Mammary epithelial cell (primary cell): ENCODE measurements at regions of chr7 and their contacts with region 1.

Region 1: GRCh38 chr7:65307651-65308299 is 65.9 kb upstream of the ZNF92 start:
- DNase-seq: peak; percentile 23
- H3K4me3 ChIP-seq: no peak overlapping the region
- H3K27ac ChIP-seq: no peak overlapping the region
- H3K4me1 ChIP-seq: no peaks in the 10 kb centered on the region
- H3K27me3 ChIP-seq: no peaks in the 10 kb centered on the region
- CTCF ChIP-seq: peak; percentile 66 to 83

Region 2: DNA sequence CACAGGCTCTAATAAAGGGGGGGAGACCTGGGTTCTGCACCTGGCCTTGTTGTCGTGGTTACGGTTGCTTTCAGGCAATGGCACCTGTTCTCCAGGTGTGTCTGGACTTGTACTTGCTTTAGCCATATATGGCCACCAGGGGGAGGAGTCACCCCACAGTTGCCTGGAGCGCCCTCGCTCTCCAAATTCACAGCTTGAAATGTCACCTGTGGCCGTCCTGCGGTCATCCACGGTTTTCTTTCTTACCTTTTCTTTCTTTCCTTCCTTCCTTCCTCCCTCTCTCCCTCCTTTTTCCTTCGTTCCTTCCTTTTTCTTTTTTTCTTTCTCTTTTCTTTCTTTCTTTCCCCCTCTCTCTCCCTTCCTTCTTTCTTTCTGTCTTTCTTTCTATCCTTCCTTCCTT is 91.3 kb before region 1 on chr7:
- CTCF ChIA-PET with region 1: no interaction called
- dilution Hi-C with region 1: no loop called
- in situ Hi-C with region 1: loop called in 1 of 2 experiments (anchors 25 kb)
- intact Hi-C with region 1: loop called (anchors 1 kb)
- DNase-seq: peak; percentile 52
- H3K4me3 ChIP-seq: no peak overlapping the region
- H3K27ac ChIP-seq: no peak overlapping the region
- H3K4me1 ChIP-seq: no peaks in the 10 kb centered on the region
- H3K27me3 ChIP-seq: no peaks in the 10 kb centered on the region
- CTCF ChIP-seq: peak; percentile 42 to 71